ENCODE measurements at regions of chr4 and their contacts with region 1.

Region 1: DNA sequence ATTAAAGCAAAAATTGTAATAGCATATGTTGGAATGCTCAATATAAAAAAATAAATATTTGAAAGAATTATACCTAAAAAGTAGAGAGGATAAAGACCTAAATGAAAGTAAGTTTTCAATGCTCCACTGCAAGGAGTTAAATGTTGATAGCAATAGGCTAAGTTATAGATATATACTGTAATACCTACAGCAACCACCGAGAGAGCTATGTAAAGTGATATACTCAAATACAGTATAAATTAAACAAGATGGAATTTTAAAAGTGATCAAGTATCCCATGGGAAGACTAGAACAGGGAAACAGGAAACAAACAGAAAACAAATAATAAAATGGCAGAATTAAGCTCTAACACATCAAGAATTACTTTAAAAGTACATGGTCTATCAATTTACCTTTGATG is 73.9 kb downstream of the CASP3 start:
- DNase-seq: no peak
- H3K4me3 ChIP-seq: no peak overlapping the region
- H3K27ac ChIP-seq: no peak overlapping the region
- H3K4me1 ChIP-seq: no peaks in the 10 kb centered on the region
- H3K27me3 ChIP-seq: no peaks in the 10 kb centered on the region
- CTCF ChIP-seq: no peak

Region 2: GRCh38 chr4:184074989-184075388 is 500.3 kb before region 1 on chr4:
- CTCF ChIA-PET with region 1: no interaction called
- POLR2A ChIA-PET with region 1: no interaction called
- intact Hi-C with region 1: no loop called
- DNase-seq: no peak
- H3K4me3 ChIP-seq: no peak overlapping the region
- H3K27ac ChIP-seq: no peak overlapping the region
- H3K4me1 ChIP-seq: no peaks in the 10 kb centered on the region
- H3K27me3 ChIP-seq: peaks cover 20% of the 10 kb centered on the region
- CTCF ChIP-seq: no peak

Region 3: DNA sequence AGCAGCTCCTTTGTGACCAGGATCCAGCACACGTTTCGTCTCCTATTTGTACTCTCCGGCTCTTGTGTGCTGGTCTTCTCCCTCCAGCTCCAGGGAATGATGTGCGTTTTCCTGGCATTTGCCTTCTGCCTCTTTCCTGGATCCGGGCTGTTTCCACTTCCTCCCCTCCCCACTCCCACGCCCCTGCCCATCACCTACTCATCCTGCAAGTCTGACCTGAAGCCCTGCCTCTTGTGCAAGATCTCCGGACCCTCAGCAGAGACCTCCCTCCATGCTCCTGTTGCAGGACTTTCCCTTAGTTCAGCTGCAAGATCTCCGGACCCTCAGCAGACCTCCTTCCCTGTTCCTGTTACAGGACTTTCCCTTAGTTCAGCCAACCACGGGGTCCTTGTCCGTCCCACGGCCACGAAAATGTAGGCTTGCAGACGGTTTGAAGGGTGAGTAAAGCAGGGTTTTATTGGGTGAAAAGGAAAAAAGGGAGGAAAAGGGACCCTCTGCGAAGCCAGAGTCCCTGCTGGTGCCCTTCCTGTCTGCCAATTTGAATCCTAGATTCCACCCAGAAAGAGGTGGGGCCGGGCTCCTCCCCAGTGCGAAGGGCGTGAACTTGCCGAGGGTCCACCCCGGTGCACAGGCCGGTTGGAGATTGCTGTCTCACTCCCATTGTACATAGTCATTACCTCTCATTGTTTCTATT is 26.5 kb before region 1 on chr4:
- CTCF ChIA-PET with region 1: no interaction called
- POLR2A ChIA-PET with region 1: interaction called, 16 read pairs
- intact Hi-C with region 1: no loop called
- DNase-seq: no peak
- H3K4me3 ChIP-seq: no peak overlapping the region
- H3K27ac ChIP-seq: no peak overlapping the region
- H3K4me1 ChIP-seq: no peaks in the 10 kb centered on the region
- H3K27me3 ChIP-seq: no peaks in the 10 kb centered on the region
- CTCF ChIP-seq: no peak

Region 4: DNA sequence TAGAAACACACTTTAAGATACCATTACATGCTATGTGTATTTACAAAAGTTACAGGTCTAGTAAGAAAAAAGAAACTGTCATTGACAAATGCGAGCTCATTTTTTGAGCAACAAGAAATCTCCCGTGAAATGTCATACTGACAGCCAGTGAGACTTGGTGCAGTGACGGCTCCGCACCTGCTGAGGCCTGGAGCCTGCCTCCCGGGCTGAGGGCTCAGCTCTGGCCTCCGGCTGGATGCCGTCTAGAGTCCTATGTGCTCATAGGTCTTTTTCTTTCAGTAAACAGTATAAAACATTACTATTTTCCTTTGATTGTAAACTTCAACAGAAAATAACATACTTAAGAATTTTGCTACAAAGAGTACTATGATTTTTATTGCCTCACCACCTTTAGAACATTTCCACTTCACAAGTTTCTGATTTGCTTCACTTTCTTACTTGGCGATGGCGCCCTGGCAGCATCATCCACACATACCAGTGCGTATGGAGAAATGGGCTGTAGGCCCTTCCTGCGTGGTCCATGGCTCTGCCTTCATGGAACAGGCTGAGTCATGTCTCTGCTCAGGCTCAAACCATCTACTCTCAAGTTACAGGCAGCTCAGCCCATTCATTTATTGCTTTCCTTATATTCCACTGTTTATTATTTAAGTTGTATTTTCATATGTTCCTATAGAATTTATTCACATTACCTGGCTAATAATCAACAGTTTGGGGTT is 52.6 kb after region 1 on chr4:
- CTCF ChIA-PET with region 1: no interaction called
- POLR2A ChIA-PET with region 1: interaction called, 17 read pairs
- intact Hi-C with region 1: no loop called
- DNase-seq: no peak
- H3K4me3 ChIP-seq: no peak overlapping the region
- H3K27ac ChIP-seq: no peak overlapping the region
- H3K4me1 ChIP-seq: peaks cover 9% of the 10 kb centered on the region; the same call in 1 of the 2 replicates
- H3K27me3 ChIP-seq: no peaks in the 10 kb centered on the region
- CTCF ChIP-seq: no peak

Measured in PC-9 (cell line).